Activated naive CD8-positive, alpha-beta T cell treated with anti-CD3 and anti-CD28 coated beads, Interleukin-2, amount 10 ng/mL, durations not matched to agents 7 days and 5 days (primary cell): ENCODE measurements at regions of chr12 and their contacts with region 1.

Region 1: GRCh38 chr12:108633534-108634248 is at the start of gene SELPLG:
- DNase-seq: peak; percentile 84
- ATAC-seq: peak; percentile 60
- H3K4me3 Mint-ChIP-seq: peak within 1 kb of the TSS; percentile 100
- H3K27ac Mint-ChIP-seq: peak within 1 kb of the TSS; percentile 100
- H3K4me1 Mint-ChIP-seq: peaks cover 46% of the 10 kb centered on the region
- H3K27me3 Mint-ChIP-seq: no peaks in the 10 kb centered on the region
- total RNA-seq, gene SELPLG: 159 to 163 TPM

Region 2: GRCh38 chr12:108516511-108517275 is 117.0 kb before region 1 on chr12:
- POLR2A ChIA-PET with region 1: no interaction called
- DNase-seq: no peak
- ATAC-seq: no peak
- H3K4me3 Mint-ChIP-seq: peak overlapping the region; percentile 8
- H3K27ac Mint-ChIP-seq: no peak overlapping the region
- H3K4me1 Mint-ChIP-seq: peaks cover 16% of the 10 kb centered on the region
- H3K27me3 Mint-ChIP-seq: no peaks in the 10 kb centered on the region

Region 3: DNA sequence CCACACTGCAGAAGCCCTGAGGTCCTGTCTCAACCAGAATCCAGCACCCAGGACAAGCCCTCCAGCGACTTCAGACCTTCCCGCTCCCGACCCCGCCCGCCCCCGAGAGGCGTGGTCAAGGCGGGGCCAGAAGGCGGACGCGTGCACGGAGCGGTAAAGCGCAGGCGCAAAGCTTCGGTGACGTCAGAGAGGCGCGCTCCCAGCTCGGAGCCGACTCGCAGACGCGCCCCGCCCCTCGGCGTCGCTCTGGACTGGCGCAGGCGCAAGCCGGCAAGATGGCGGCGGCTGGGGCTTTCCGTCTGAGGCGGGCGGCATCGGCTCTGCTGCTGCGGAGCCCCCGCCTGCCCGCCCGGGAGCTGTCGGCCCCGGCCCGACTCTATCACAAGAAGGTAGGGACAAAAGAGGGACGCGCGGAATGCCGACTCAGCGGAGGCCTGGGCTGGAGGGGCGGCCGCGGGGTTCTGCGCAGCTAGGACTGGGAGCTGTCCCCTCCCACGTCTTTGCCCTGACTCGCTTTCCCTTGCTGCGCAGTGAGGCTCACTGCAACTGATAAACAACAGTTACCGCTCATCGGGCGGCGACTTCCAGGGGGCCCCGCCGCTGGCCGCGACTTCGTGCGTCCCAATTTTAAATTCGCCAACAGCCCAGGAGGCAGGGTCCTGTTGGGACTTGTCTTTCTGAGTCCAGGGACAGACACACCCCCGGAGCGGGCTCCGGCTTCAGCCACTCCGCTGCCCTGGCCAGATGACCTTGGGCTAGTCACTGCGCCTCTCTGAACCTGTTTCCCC is 71.1 kb before region 1 on chr12 and contains the start of gene ISCU:
- POLR2A ChIA-PET with region 1: interaction called, 146 read pairs
- DNase-seq: peak; percentile 100
- ATAC-seq: peak; percentile 79
- H3K4me3 Mint-ChIP-seq: peak within 1 kb of the TSS; percentile 94
- H3K27ac Mint-ChIP-seq: peak within 1 kb of the TSS; percentile 98
- H3K4me1 Mint-ChIP-seq: peaks cover 45% of the 10 kb centered on the region
- H3K27me3 Mint-ChIP-seq: no peaks in the 10 kb centered on the region
- total RNA-seq, gene ISCU: 86.8 to 89.6 TPM

Region 4: DNA sequence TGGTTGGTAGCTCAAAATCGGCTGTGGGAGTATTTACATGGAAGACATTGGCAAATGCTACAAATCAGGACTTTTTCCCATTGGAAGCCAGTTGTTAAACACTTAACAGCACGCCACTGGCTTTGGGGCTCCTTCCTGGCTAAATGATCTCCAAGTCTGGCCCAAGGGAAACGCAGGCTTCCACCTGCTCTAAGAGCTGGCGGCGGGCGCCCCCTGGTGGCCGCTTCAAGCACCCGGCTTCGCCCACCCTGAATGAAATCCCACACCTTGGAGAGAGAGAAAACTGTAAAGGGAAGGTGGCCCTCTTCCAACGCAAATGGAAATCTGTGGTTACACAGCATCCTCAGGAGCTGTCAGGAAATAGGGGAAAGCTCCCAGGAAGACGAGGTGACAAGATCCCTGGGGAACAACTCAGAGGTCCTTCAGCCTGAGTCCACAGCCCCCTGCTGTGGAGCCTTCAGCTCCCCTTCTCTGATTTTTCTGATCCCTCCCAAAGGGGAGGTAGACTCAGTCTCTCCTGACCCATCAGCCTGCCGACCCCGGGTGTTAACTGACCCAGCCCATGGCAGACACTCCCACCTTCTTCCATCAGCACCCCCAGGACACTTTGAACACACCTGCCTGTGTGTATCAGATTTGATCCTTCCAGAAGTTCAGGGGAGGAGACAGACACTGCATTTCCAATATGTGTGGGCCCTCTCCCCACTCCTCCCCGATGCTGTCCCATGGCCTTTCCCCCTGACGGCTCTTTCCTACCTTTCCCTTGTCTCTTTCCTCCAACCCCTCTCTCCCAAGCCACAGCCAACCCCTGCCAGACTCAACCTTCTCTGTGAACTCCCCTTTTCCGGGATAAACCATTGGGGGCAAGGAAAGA is 15.4 kb before region 1 on chr12:
- POLR2A ChIA-PET with region 1: interaction called, 156 read pairs
- DNase-seq: peak; percentile 86
- ATAC-seq: peak; percentile 55
- H3K4me3 Mint-ChIP-seq: no peak overlapping the region
- H3K27ac Mint-ChIP-seq: peak overlapping the region; percentile 89
- H3K4me1 Mint-ChIP-seq: peaks cover 39% of the 10 kb centered on the region
- H3K27me3 Mint-ChIP-seq: no peaks in the 10 kb centered on the region

Region 5: DNA sequence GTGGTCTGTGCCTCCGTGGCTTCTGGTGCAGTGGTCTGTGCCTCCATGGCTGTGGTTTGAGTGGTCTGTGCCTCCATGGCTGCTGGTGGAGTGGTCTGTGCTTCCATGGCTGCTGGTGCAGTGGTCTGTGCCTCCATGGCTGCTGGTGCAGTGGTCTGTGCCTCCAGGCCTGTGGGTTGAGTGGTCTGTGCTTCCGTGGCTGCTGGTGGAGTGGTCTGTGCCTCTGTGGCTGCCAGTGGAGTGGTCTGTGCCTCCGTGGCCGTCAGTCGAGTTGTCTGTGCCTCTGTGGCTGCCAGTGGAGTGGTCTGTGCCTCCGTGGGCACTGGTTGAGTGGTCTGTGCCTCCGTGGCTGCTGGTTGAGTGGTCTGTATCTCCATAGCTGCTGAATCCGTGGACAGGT is 10.1 kb before region 1 on chr12:
- POLR2A ChIA-PET with region 1: interaction called, 156 read pairs
- DNase-seq: no peak
- ATAC-seq: no peak
- H3K4me3 Mint-ChIP-seq: no peak overlapping the region
- H3K27ac Mint-ChIP-seq: peak overlapping the region; percentile 30
- H3K4me1 Mint-ChIP-seq: peaks cover 29% of the 10 kb centered on the region
- H3K27me3 Mint-ChIP-seq: no peaks in the 10 kb centered on the region

Region 6: DNA sequence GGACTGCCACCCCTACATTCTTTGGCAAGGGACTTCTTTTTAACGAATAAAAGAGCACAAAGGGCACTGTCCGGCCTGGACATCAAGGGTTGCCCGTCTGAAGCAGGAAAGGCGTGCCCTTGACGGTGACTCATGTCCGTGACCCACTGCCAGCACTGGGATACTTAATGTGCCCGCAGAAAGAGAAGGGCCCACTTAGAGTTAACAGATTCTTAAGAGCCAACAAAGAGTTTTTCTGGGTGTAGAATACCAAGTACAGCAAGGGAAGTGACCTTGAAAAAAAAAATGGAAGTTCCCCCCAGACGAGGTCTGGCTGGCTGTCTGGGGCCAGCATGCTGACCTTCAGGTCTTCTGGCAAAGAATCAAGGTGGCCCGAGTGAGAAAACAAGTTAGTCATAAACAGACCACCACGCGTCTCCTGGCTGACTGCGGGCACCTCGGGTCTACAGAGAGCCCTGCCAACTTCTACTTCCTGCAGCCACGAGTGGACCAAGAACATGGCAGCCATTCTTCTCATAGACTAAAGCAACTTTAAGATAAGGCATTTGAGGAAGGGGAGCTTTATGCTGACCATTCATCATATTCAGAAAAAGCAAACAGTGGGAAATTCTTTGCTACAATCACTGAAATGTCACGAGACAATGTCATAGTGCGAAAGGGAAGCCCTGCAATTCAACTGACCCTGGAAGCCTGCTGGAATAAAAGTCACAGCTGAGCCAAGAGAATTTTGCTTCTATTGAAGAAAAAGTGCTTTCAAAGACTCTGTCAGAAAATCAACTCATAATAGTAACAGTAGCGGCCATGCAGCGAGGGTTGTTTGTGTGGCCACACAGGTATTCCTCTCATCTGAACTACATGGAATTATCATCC is 10.5 kb after region 1 on chr12:
- POLR2A ChIA-PET with region 1: interaction called, 63 read pairs
- DNase-seq: no peak
- ATAC-seq: no peak
- H3K4me3 Mint-ChIP-seq: no peak overlapping the region
- H3K27ac Mint-ChIP-seq: no peak overlapping the region
- H3K4me1 Mint-ChIP-seq: peaks cover 23% of the 10 kb centered on the region
- H3K27me3 Mint-ChIP-seq: no peaks in the 10 kb centered on the region

Region 7: GRCh38 chr12:108664338-108665258 is 30.9 kb after region 1 on chr12:
- POLR2A ChIA-PET with region 1: interaction called, 18 read pairs
- DNase-seq: peak; percentile 58
- ATAC-seq: peak; percentile 98
- H3K4me3 Mint-ChIP-seq: peak overlapping the region; percentile 50
- H3K27ac Mint-ChIP-seq: peak overlapping the region; percentile 68
- H3K4me1 Mint-ChIP-seq: peaks cover 9% of the 10 kb centered on the region
- H3K27me3 Mint-ChIP-seq: no peaks in the 10 kb centered on the region

Region 8: GRCh38 chr12:108691175-108691997 is 57.7 kb after region 1 on chr12:
- POLR2A ChIA-PET with region 1: interaction called, 13 read pairs
- DNase-seq: peak; percentile 67
- ATAC-seq: peak; percentile 79
- H3K4me3 Mint-ChIP-seq: peak overlapping the region; percentile 79
- H3K27ac Mint-ChIP-seq: peak overlapping the region; percentile 89
- H3K4me1 Mint-ChIP-seq: peaks cover 48% of the 10 kb centered on the region
- H3K27me3 Mint-ChIP-seq: no peaks in the 10 kb centered on the region